Esophagus squamous epithelium (tissue), 5 donors: ENCODE measurements at regions of chr17 and their contacts with region 1.

Region 1: GRCh38 chr17:5592382-5592781 is 8.1 kb upstream of the NLRP1 start:
- DNase-seq: no peak
- H3K4me3 ChIP-seq: no peak overlapping the region
- H3K27ac ChIP-seq: no peak overlapping the region
- H3K4me1 ChIP-seq: peaks cover 0 to under 1% (median 0%) of the 10 kb centered on the region in 3 donors
- H3K27me3 ChIP-seq: peaks cover 0 to 66% (median 0%) of the 10 kb centered on the region in 4 donors
- CTCF ChIP-seq: peak; percentile 24 to 70 (median 54)
- POLR2A ChIP-seq: no peak

Region 2: GRCh38 chr17:5706577-5707216 is 114.3 kb after region 1 on chr17:
- intact Hi-C with region 1: loop called (anchors 10 kb)
- DNase-seq: no peak
- H3K4me3 ChIP-seq: no peak overlapping the region
- H3K27ac ChIP-seq: no peak overlapping the region
- H3K4me1 ChIP-seq: no peaks in the 10 kb centered on the region
- H3K27me3 ChIP-seq: peaks cover 0 to 57% (median 1%) of the 10 kb centered on the region in 4 donors
- CTCF ChIP-seq: peak in 5 of 6 experiments; percentile 44 to 63 (median 48)
- POLR2A ChIP-seq: no peak